Left lung (tissue), 14 donors: ENCODE measurements at regions of chr6 and their contacts with region 1.

Region 1: DNA sequence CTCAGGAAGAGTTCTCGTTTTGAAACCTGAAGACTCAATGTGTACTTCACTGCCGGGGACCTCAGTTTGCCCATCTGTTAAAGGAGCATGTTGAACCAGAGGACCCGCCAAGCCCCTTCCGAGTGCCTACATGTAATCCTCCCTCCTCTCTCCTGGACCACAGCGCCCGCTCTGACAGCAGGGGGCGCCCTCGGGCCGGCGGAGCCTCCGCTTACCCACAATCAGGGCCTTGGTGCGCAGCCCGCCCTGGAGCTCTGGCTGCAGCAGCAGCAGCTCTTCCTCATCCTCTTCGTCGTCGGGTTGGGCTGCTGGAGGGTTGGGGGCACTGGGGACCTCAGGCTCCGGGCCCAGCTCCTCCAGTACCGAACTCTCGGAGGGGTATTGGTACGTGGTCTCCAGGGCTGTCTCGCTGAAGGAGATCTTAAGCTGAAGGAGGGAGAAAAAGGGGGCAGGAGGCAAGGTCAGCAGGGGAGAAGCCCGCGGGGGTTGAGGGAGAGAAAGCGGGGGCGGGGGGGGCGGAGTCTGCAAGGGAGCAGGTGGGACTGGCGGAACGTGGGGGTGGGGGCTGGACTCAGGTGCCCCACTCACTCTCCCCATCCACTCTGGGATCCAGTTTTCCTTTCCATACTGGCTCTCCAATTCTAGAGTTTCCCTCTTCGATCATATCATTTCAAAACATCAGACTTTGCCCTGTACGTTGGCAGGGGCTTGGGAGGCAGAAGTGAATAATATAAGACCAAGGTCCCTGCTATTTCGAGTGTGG is 6.3 kb upstream of the DHX16 start:
- DNase-seq: peak; percentile 65 to 98 (median 86)
- ATAC-seq: peak; percentile 85
- H3K4me3 ChIP-seq: peak overlapping the region in 1 of 2 donors; percentile 91
- H3K27ac ChIP-seq: peak overlapping the region in 1 of 2 donors; percentile 97
- H3K4me1 ChIP-seq: peaks cover 13 to 47% of the 10 kb centered on the region in 2 donors
- H3K27me3 ChIP-seq: no peaks in the 10 kb centered on the region
- CTCF ChIP-seq: peak; percentile 81 to 91

Region 2: DNA sequence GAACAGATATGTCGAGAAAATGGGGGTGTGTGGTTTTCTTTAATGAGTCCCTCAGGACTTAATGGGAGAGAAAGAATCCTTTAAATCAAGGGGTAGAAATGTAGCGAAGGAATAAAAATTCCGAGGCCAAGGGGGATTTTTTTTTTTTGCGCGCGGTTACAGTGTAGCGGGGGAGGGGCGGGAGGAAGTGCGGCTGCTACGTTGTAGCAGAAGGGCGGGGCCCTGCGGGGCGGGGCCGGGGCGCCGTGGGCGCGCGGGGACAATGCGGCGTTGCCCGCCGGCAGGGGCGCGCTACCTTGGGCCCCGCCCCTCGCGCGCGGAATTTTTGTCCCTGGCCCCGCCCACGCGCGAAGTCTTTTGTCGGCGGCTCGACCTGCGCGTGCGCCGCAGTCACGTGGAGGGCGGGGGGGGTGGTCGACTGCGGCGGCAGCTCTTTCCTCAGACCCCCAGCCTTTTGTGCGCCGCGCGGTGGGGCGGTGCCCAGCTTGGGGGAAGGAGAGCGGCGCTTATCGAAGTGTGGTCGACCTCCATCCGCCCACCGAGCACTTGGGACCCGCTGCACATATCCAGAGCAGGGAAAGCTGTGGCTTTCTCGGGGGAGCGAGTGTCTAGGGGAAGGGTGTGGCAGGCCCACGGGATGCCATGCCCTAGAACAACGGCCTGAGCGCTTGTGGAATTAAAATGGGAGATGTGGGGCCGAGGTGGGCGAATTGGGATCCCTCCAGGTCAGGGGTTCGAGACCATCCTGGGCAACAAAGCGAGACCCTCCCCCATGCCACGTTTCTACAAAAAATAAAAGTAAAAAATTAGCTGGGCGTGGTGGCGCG is 42.3 kb after region 1 on chr6:
- intact Hi-C with region 1: loop called in 1 of 2 experiments (anchors 2 kb)
- DNase-seq: peak; percentile 89 to 97 (median 94)
- ATAC-seq: peak; percentile 74
- H3K4me3 ChIP-seq: peak overlapping the region; percentile 80
- H3K27ac ChIP-seq: peak overlapping the region; percentile 94
- H3K4me1 ChIP-seq: peaks cover 30 to 72% of the 10 kb centered on the region in 2 donors
- H3K27me3 ChIP-seq: no peaks in the 10 kb centered on the region
- CTCF ChIP-seq: peak; percentile 46 to 72